ENCODE measurements at regions of chr2 and their contacts with region 1.

Region 1: DNA sequence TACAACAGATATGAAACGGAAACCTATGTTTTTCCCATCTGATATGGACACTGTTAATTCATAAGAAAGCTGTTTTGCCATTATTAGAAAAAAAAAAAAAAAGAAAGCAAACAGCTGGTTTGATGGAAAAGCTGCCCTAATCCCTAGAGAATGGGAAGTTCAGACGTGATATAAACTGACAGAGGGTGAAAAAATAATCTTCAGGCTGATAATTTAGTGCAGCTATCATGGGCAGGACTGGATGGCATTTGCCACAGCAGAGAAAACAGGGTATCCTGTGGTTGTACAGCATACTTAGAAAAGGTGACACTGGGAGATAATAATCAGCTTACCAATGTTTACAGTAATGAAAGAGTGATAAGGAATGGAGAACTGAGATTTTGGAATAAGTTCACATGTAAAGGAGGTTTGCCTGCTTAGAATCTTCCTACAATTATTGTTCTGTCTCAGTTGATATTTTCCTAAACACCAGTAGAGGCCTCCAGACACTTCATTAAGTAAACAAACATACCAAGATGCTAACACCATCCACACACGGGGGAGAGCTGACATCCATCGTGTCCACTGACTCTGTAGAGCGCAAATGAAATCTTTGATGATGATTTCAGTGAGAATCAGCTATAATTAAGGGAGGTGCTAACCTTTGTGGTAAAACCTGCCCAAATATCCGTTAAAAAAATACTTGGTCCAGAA is 211.6 kb upstream of the MMADHC start:
- DNase-seq: peak in 1 of 2 experiments; percentile 4
- H3K4me3 ChIP-seq: no peak overlapping the region
- H3K27ac ChIP-seq: no peak overlapping the region
- H3K4me1 ChIP-seq: no peaks in the 10 kb centered on the region
- H3K27me3 ChIP-seq: no peaks in the 10 kb centered on the region
- CTCF ChIP-seq: peak; percentile 37; the same call in 1 of the 2 replicates

Region 2: GRCh38 chr2:150133623-150134022 is 334.5 kb after region 1 on chr2:
- CTCF ChIA-PET with region 1: no interaction called
- POLR2A ChIA-PET with region 1: no interaction called
- intact Hi-C with region 1: loop called (anchors 2 kb)
- DNase-seq: peak; percentile 49 to 81
- H3K4me3 ChIP-seq: no peak overlapping the region
- H3K27ac ChIP-seq: peak overlapping the region; percentile 74
- H3K4me1 ChIP-seq: peaks cover 5% of the 10 kb centered on the region; the same call in 1 of the 2 replicates
- H3K27me3 ChIP-seq: no peaks in the 10 kb centered on the region
- CTCF ChIP-seq: no peak

Region 3: DNA sequence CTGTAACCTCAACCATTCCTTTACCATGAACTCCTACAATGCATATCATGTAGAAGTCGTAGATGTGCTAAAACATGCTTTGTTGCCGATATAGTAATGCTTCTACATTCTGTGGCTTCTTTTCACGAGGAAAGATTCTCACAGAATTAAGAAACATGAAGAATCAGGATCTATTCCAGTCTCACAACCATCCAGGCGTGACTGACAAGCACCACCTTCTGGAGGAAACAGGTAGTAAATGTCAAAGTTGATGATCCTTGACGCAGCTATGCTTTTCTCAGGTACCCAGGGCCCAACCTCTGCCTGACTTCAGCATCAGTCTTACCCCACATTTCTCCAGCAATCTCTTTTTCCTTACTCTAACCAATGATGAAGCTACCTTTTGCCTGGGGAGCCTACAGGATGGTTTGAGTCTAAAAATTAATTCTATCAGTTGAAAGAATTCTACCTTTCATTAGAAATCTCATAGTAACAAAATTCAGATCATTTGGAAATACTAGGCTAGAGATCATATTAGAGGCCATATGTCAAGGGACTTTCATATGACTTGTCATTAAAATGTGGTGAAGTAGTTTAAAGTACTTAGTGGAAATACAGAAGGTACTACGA is 811.6 kb after region 1 on chr2:
- CTCF ChIA-PET with region 1: no interaction called
- POLR2A ChIA-PET with region 1: no interaction called
- intact Hi-C with region 1: loop called (anchors 1 kb)
- DNase-seq: peak; percentile 35 to 56
- H3K4me3 ChIP-seq: no peak overlapping the region
- H3K27ac ChIP-seq: no peak overlapping the region
- H3K4me1 ChIP-seq: no peaks in the 10 kb centered on the region
- H3K27me3 ChIP-seq: no peaks in the 10 kb centered on the region
- CTCF ChIP-seq: peak; percentile 66

Measured in PC-9 (cell line).